ENCODE measurements at regions of chr4 and their contacts with region 1.

Region 1: DNA sequence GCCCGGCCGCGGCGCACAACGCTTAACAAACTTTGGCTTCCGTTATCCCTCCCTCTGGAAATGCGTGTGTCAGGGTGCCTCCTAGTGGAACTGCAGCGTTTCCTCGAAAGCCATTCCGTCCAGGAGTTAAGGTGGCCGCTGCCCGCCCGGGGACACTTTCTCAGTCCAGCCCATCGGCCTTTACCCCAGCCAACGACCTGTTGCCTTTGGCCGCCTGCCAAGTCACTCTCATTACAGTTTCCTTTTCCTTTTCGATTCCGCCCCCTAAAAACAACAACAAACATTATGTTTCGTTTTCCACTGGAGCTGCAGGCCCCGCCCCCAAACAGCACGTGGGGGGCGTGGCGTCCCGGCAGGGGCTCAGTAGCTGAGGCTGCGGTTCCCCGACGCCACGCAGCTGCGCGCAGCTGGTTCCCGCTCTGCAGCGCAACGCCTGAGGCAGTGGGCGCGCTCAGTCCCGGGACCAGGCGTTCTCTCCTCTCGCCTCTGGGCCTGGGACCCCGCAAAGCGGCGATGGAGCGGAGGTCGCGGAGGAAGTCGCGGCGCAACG is at the start of gene HERC5:
- DNase-seq: peak; percentile 94
- ATAC-seq: peak; percentile 93
- total RNA-seq, gene HERC5: 1.6 TPM

Region 2: DNA sequence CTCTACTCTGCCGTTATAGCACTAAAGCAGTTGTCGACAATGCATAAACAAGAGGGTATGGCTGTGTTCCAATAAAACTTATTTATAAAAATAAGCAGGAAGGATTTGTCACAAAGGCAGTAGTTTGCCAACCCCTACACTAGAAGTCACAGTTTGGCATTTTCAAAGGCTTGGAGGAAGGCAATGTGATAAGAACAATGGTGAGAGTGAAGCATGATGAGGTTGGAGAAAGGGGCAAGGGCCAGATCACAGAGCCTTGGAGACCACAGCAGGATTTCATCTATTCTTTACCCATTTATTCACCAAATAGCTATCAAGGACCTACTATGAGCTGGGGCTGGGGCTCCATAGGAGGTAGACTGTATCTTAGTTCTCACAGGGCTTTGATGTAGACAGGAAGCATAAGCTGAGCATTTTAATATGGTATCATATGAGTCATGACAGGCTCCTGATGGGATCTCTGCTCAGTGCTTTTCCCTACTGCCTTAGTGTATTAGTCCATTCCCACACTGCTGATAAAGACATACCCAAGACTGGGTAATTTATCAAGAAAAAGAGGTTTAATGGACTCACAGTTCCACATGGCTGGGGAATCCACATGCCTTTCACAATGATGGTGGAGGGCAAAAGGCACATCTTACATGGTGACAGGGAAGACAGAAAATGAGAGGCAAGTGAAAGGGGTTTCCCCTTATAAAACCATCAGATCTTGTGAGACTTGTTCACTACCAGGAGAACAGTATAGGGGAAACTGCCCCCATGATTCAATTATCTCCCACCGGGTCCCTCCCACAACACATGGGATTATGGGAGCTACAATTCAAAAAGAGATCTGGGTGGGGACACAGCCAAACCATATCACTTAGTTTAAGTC is 231.4 kb before region 1 on chr4:
- intact Hi-C with region 1: loop called (anchors 1 kb)
- DNase-seq: no peak
- ATAC-seq: no peak

Region 3: DNA sequence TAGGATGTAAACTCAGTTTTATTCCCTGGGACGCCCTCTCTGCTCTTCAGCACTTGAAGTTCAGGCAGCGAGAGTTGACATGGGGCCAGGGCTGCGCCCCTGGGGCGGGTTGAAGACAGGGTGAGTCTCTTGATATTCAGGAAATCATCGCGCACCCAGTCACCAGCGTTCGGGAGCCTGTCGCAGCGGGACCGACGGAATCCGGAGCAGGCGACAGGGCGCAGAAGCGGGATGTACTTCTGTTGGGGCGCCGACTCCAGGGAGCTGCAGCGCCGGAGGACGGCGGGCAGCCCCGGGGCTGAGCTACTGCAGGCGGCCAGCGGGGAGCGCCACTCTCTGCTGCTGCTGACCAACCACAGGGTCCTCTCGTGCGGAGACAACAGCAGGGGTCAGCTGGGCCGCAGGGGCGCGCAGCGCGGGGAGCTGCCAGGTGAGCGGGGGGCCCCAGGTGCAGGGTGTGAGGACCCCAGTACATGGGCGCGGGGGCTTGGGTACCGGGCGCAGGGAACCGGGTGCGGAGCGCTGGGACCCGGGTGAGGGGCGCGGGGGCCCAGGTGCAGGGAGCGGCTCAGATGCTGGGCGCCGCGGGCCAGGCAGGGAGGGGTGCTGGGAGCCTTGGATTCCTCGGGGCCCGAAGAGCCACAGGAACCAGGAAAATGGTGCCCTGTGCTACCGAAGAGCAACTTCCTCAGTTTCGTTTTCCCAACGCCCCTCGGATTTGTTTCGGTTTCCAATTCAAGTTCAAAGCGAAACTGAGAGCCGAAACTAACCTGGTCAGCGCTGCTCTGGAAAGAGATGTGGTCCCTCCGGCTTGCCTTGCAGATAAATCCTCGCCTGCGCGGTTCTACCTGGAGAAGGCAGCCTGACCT is 77.9 kb before region 1 on chr4 and contains the start of gene HERC6:
- intact Hi-C with region 1: loop called (anchors 2 kb)
- DNase-seq: peak; percentile 89
- ATAC-seq: peak; percentile 95
- total RNA-seq, gene HERC6: 6.1 TPM

Region 4: GRCh38 chr4:88523325-88524129 is 66.7 kb after region 1 on chr4 and contains the start of gene PYURF:
- intact Hi-C with region 1: loop called (anchors 2 kb)
- DNase-seq: peak; percentile 99
- ATAC-seq: peak; percentile 98
- total RNA-seq, gene PYURF: 56.3 TPM